ENCODE measurements at regions of chr1 and their contacts with region 1.

Region 1: GRCh38 chr1:37890378-37891014 is 31.1 kb upstream of the MTF1 start:
- DNase-seq: no peak
- ATAC-seq: no peak
- H3K4me3 ChIP-seq: no peak overlapping the region
- H3K27ac ChIP-seq: peak overlapping the region in 1 of 12 donors; percentile 35
- H3K4me1 ChIP-seq: peaks cover 0 to 3% (median 0%) of the 10 kb centered on the region in 12 donors
- H3K27me3 ChIP-seq: no peaks in the 10 kb centered on the region
- CTCF ChIP-seq: peak in 11 of 12 donors; percentile 31 to 68 (median 49)
- POLR2A ChIP-seq: no peak

Region 2: DNA sequence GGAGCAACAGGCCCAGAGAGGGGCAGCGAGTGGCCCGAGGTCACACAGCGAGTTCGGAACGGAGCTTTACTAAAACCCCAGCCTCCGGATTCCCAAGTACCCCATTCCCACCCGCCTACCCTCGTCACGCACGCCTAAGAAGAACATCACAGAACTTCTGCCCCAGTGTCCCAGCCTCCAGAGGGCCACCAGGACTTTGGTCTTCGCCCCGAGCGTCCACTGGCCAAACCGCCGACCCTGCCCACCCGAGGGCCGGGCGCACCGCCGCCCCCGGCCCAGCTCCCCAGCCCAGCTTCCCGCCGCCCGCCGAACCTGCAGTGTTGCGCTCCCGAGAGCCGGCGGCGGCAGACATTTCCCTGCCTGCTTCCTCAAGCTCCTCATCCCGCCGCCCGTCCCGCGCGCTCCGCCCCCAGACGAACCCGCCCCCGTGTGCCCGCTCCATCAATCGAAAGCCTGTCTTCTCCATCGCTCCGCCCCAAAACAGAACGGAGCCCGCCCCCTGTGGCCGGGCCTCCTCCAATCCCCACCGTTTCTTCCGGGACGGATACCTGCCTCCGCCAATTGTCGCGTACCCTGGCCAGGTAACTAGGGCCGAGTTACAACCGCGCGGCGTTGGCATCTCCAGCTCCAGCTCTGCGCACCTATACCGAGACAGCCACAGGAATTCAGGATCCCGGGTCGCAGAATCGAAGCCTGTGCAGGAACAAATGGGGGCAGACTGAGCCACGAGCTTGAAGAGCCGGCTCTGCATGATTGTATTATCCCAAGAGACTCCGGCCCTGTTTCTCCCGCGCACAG is 41.1 kb after region 1 on chr1:
- intact Hi-C with region 1: no loop called
- DNase-seq: peak; percentile 96 to 98 (median 97)
- ATAC-seq: peak; percentile 97 to 99 (median 98)
- H3K4me3 ChIP-seq: peak overlapping the region; percentile 68 to 96 (median 84)
- H3K27ac ChIP-seq: peak overlapping the region in 11 of 12 donors; percentile 58 to 87 (median 82)
- H3K4me1 ChIP-seq: peaks cover 1 to 49% (median 24%) of the 10 kb centered on the region in 12 donors
- H3K27me3 ChIP-seq: no peaks in the 10 kb centered on the region
- CTCF ChIP-seq: peak in 4 of 12 donors; percentile 11 to 36 (median 20)
- POLR2A ChIP-seq: peak in 1 of 2 donors; percentile 36

Region 3: GRCh38 chr1:37946703-37947360 is 56.3 kb after region 1 on chr1 and contains the start of gene INPP5B:
- intact Hi-C with region 1: loop called in 1 of 10 experiments (anchors 10 kb)
- DNase-seq: peak; percentile 90 to 94 (median 92)
- ATAC-seq: peak; percentile 95 to 97 (median 96)
- H3K4me3 ChIP-seq: peak within 1 kb of the TSS; percentile 50 to 94 (median 81)
- H3K27ac ChIP-seq: peak within 1 kb of the TSS; percentile 13 to 95 (median 89)
- H3K4me1 ChIP-seq: peaks cover 0 to 30% (median 16%) of the 10 kb centered on the region in 12 donors
- H3K27me3 ChIP-seq: no peaks in the 10 kb centered on the region
- CTCF ChIP-seq: peak in 4 of 12 donors; percentile 9 to 36 (median 22)
- POLR2A ChIP-seq: peak in 1 of 2 donors; percentile 53
- total RNA-seq, gene INPP5B: 7.7 to 16.2 (median 13.1) TPM

Region 4: GRCh38 chr1:37978541-37978940 is 88.0 kb after region 1 on chr1:
- intact Hi-C with region 1: loop called (anchors 2 to 10 kb)
- DNase-seq: no peak
- ATAC-seq: no peak
- H3K4me3 ChIP-seq: no peak overlapping the region
- H3K27ac ChIP-seq: no peak overlapping the region
- H3K4me1 ChIP-seq: peaks cover 0 to 5% (median 0%) of the 10 kb centered on the region in 12 donors
- H3K27me3 ChIP-seq: no peaks in the 10 kb centered on the region
- CTCF ChIP-seq: no peak
- POLR2A ChIP-seq: no peak

Measured in heart left ventricle (tissue), 16 donors.